K562 (cell line): ENCODE measurements at regions of chr6 and their contacts with region 1.

Region 1: DNA sequence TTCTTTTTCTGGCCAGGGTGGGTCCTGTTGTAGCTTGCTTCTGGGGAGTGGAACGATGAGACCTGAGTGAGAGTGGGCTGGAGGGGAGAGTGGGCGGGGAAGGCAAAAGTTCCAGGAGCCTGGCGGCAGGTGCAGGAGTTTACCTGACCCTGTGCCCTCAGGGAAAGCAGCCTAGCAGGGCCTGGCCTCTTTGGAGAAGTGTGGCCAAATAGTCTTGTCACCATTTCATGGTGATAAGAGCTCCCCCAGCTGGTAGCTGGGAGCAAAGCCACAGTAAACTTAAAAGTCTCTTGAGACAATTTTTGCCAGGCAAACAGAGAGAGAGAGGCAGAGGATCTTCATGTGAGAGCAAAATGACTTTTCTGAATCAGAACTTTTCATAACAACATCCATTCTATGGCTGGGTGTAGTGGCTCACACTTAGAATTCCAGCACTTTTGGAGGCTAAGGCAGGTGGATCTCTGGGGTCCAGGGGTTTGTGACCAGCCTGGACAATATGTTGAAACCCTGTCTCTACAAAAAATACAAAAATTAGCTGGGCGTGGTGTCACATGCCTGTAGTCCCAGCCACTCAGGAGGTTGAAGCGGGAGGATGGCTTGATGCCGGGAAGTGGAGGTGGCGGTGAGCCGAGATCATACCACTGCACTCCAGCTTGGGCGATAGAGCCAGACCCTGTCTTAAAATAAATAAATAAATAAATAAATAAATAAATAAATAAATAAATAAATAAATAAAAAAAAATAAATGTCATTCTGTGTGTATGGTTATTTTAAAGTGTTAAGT is 161.8 kb upstream of the SCGN start:
- DNase-seq: peak; percentile 39 to 82 (median 55)
- ATAC-seq: peak; percentile 98
- H3K4me3 ChIP-seq: no peak overlapping the region
- H3K27ac ChIP-seq: no peak overlapping the region
- H3K4me1 ChIP-seq: no peaks in the 10 kb centered on the region
- H3K27me3 ChIP-seq: no peaks in the 10 kb centered on the region; a peak in 1 of 5 replicates
- CTCF ChIP-seq: peak; percentile 77 to 89 (median 87)
- EP300 ChIP-seq: no peak
- POLR2A ChIP-seq: no peak
- RAD21 ChIP-seq: peak; percentile 61 to 78

Region 2: DNA sequence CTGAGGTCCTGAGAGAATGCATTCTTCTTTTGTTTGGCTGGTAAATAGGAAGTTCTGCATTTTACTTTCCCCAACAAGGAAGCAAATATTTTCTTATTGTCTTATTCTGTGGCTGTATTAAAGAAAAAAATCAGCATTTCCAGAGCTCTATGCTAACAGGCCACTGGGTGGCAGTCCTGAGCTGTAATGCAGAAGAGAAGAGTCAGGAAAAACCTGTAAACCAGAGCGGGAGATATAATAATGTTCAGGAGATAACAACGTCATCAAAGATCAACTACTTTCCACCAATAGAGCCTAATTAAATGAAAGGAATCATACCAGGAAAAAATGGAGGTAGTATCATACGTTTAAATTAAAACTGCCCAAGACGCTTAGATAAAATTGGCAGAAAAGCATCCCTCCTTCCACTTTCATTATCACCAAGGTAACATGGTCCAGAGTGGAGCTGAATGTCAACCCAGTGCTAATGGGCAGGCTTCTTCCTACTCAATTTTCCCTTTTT is 266.7 kb before region 1 on chr6:
- CTCF ChIA-PET with region 1: interaction called, 7 read pairs
- POLR2A ChIA-PET with region 1: no interaction called
- in situ Hi-C with region 1: no loop called
- intact Hi-C with region 1: loop called (anchors 1 kb)
- DNase-seq: peak; percentile 57 to 73 (median 59)
- ATAC-seq: peak; percentile 87
- H3K4me3 ChIP-seq: no peak overlapping the region
- H3K27ac ChIP-seq: no peak overlapping the region
- H3K4me1 ChIP-seq: peaks cover 0 to under 1% of the 10 kb centered on the region in 2 experiments; a peak in 1 of 5 replicates
- H3K27me3 ChIP-seq: peaks cover 0 to 5% of the 10 kb centered on the region in 2 experiments; a peak in 2 of 5 replicates
- CTCF ChIP-seq: peak; percentile 82 to 92 (median 84)
- EP300 ChIP-seq: no peak
- POLR2A ChIP-seq: no peak
- RAD21 ChIP-seq: peak; percentile 80 to 87

Region 3: GRCh38 chr6:25263657-25264056 is 226.6 kb before region 1 on chr6:
- CTCF ChIA-PET with region 1: interaction called, 8 read pairs
- POLR2A ChIA-PET with region 1: no interaction called
- in situ Hi-C with region 1: no loop called
- intact Hi-C with region 1: loop called (anchors 1 kb)
- DNase-seq: no peak
- ATAC-seq: no peak
- H3K4me3 ChIP-seq: no peak overlapping the region
- H3K27ac ChIP-seq: no peak overlapping the region
- H3K4me1 ChIP-seq: no peaks in the 10 kb centered on the region
- H3K27me3 ChIP-seq: no peaks in the 10 kb centered on the region
- CTCF ChIP-seq: no peak
- EP300 ChIP-seq: no peak
- POLR2A ChIP-seq: no peak
- RAD21 ChIP-seq: no peak

Region 4: DNA sequence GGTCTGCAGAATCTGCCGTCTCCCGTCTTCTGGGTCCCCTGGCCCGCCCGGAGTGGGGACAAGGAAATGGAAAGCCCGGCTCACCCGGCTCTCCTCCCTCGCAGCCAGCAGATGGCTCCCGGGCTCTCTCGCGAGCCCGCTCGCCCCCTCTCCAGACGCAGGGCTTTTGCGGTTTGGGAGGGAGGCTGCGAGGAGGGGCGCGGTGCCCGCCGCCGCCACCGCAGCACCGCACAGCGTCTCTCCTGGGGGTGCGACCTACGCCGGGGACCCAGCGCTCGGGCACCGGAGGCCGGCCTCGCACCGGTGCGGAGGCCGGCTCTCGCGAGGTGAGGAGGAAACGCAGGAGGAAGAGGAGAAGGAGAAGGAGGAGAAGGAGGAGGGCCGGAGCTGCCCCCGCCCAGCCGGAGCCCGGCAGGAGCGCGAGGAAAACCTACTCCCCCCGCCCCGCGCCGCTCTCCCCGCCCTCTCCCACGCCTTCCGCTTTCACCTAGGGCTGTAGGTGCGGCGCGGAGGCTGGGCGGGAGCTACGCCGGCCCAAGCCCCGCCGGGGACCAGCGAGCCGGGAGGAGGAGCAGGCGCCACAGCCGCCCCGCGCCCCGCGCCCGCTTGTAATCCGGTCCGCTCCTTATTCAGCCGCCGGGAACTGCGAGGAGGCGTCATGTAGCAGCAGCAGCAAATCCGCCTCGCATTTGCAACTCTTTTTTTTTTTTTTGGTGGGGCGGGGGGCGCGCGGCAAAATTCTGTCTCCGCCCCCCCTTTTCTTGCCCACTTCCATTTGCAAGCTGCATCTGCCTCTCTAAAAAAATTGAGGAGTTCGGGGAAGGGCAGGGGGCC is 211.1 kb before region 1 on chr6 and contains the start of gene CARMIL1:
- CTCF ChIA-PET with region 1: interaction called, 6 read pairs
- POLR2A ChIA-PET with region 1: no interaction called
- in situ Hi-C with region 1: no loop called
- intact Hi-C with region 1: loop called (anchors 1 kb)
- DNase-seq: peak; percentile 80 to 92 (median 90)
- ATAC-seq: peak; percentile 97
- H3K4me3 ChIP-seq: peak within 1 kb of the TSS; percentile 60
- H3K27ac ChIP-seq: no peak within 1 kb of the TSS
- H3K4me1 ChIP-seq: peaks cover 2 to 17% of the 10 kb centered on the region in 2 experiments; a peak in 2 of 5 replicates
- H3K27me3 ChIP-seq: peaks cover 4 to 26% of the 10 kb centered on the region in 2 experiments; a peak in 4 of 5 replicates
- CTCF ChIP-seq: peak; percentile 70 to 85 (median 70)
- EP300 ChIP-seq: no peak
- POLR2A ChIP-seq: no peak
- RAD21 ChIP-seq: peak; percentile 78
- polyA plus RNA-seq, gene CARMIL1: 0.08 TPM in 1 of 2 experiments, not detected in the other